ENCODE measurements at regions of chr11 and their contacts with region 1.

Region 1: DNA sequence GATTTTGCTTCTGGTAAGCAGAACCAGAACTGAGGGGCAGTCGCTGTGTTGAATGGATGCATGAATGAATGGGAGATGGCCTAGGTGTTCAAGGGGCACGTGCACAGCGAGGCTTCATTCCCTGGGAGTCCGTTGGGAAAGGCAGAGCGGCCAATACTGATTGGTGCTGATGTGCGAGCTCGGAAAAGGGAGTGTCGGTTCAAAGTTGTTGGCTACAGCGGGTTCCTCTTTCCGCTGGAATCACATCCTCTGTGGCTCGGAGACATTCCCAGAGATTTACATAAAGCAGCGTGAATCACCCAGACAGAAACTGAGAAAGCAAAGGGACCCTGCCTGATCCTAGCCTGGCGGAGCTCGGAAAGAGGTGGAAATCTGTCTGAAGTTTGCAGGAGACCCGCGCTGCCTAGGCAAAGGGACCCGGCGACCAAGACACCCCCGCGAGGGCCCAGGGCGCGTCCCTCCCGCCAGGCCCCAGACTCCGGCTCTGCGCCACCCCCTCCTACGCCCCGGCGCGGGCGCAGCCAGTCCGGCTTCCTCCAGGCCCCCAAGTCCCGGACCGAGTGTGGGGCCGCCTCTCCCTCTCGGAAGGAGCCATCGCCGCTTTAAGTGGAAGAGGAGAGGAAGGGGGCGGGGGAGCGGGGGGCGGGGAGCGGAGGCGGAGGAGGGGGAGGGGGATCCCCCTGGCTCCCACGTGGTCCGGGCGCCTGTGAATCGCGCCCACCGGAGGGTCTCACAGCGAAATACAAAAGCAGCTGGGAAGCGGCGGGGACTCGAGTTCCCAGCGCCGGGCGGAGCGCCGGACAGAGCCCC is at the start of gene FJX1:
- DNase-seq: peak; percentile 87
- H3K4me3 Mint-ChIP-seq: peak within 1 kb of the TSS; percentile 82
- H3K27ac Mint-ChIP-seq: no peak within 1 kb of the TSS
- H3K4me1 Mint-ChIP-seq: peaks cover 28% of the 10 kb centered on the region
- H3K27me3 Mint-ChIP-seq: no peaks in the 10 kb centered on the region
- CTCF ChIP-seq: no peak
- total RNA-seq, gene FJX1: 33.3 and 53.7 TPM in 2 replicates

Region 2: GRCh38 chr11:35485656-35486322 is 132.1 kb before region 1 on chr11:
- CTCF ChIA-PET with region 1: interaction called, 5 read pairs
- POLR2A ChIA-PET with region 1: no interaction called
- intact Hi-C with region 1: loop called (anchors 5 kb)
- DNase-seq: peak; percentile 80
- H3K4me3 Mint-ChIP-seq: no peak overlapping the region
- H3K27ac Mint-ChIP-seq: no peak overlapping the region
- H3K4me1 Mint-ChIP-seq: peaks cover 17% of the 10 kb centered on the region
- H3K27me3 Mint-ChIP-seq: peaks cover 10% of the 10 kb centered on the region
- CTCF ChIP-seq: peak; percentile 92

Region 3: DNA sequence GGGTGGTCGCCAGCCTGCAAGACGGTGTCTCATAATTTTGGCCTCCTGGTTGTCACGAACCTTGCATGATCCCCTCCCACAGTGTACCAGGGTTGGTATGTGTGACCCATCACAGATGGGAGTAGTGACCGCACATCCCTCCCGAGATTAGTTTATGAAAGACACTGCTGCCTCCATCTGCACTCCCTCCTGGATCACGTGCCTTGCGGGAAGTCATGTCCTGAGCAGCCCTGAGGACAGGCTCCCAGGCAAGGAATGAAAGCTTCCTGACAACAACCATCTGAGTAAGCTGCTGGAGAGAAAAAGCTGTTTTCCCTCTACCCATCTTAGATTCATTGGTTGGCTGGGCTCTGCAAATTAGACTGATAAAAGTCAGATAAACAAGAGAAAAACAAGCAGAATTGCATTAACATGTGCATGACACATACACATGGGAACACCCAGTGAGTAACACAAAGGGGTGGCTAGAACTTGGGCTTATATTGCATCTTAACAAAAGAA is 78.1 kb before region 1 on chr11:
- CTCF ChIA-PET with region 1: no interaction called
- POLR2A ChIA-PET with region 1: no interaction called
- intact Hi-C with region 1: no loop called
- DNase-seq: no peak
- H3K4me3 Mint-ChIP-seq: no peak overlapping the region
- H3K27ac Mint-ChIP-seq: no peak overlapping the region
- H3K4me1 Mint-ChIP-seq: peaks cover 8% of the 10 kb centered on the region
- H3K27me3 Mint-ChIP-seq: no peaks in the 10 kb centered on the region
- CTCF ChIP-seq: no peak

Region 4: GRCh38 chr11:35794850-35795249 is 177.0 kb after region 1 on chr11:
- CTCF ChIA-PET with region 1: interaction called, 7 read pairs
- POLR2A ChIA-PET with region 1: interaction called, 4 read pairs
- intact Hi-C with region 1: loop called (anchors 5 kb)
- DNase-seq: peak; percentile 61
- H3K4me3 Mint-ChIP-seq: no peak overlapping the region
- H3K27ac Mint-ChIP-seq: peak overlapping the region; percentile 81
- H3K4me1 Mint-ChIP-seq: peaks cover 64% of the 10 kb centered on the region
- H3K27me3 Mint-ChIP-seq: no peaks in the 10 kb centered on the region
- CTCF ChIP-seq: no peak

Region 5: DNA sequence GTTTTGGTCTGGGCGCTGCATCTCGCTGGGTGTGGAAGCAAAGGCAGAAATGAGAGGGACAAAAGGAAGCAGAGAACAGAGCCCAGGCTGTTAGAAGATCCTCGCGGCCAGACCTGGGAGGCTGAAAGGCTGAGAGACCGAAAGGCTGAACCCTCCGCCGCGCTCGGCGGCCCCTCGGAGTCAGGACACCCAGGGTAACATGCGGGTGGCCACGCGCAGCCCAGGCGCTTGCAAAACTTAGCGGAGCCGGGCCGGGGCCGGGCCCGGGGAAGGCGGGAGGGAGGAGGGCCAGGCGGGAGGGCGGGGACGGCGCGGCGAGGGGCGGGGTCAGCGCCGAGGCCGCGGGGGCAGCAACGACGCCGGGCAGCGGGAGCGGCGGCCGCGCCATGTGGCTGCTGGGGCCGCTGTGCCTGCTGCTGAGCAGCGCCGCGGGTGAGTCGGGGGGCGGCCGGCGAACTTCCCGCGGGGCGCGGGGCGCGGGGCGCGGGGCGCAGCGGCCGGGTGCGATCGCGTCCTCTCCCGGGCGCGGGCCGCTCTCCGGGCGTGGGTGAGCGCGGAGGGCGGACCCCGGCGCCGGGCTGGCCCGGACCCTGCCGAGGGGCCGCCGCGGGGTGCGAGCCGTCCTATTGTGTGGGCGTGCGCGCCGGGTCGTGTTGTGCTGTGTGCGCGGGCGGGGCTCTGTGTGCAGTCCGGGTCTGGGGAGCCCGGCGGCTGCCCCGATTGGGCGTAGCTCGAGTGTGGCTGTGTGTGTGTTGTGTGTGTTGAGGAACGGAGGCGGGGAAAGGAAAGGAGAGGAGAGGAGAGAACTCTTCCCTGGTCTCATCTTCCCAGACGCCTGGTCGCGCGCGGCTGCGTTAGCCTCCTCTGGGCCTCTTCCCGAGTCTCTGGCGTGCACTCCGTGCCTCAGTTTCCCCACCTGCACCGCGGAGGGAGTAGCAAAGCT is 326.1 kb after region 1 on chr11 and contains the start of gene LDLRAD3:
- CTCF ChIA-PET with region 1: no interaction called
- POLR2A ChIA-PET with region 1: interaction called, 3 read pairs
- intact Hi-C with region 1: loop called (anchors 5 kb)
- DNase-seq: peak; percentile 86
- H3K4me3 Mint-ChIP-seq: peak within 1 kb of the TSS; percentile 93
- H3K27ac Mint-ChIP-seq: peak within 1 kb of the TSS; percentile 73
- H3K4me1 Mint-ChIP-seq: peaks cover 37% of the 10 kb centered on the region
- H3K27me3 Mint-ChIP-seq: no peaks in the 10 kb centered on the region
- CTCF ChIP-seq: no peak
- total RNA-seq, gene LDLRAD3: 39.2 and 55.7 TPM in 2 replicates

Region 6: GRCh38 chr11:36131721-36132397 is 514.0 kb after region 1 on chr11:
- CTCF ChIA-PET with region 1: no interaction called
- POLR2A ChIA-PET with region 1: interaction called, 3 read pairs
- intact Hi-C with region 1: loop called (anchors 5 kb)
- DNase-seq: peak; percentile 24
- H3K4me3 Mint-ChIP-seq: no peak overlapping the region
- H3K27ac Mint-ChIP-seq: peak overlapping the region; percentile 44
- H3K4me1 Mint-ChIP-seq: peaks cover 9% of the 10 kb centered on the region
- H3K27me3 Mint-ChIP-seq: no peaks in the 10 kb centered on the region
- CTCF ChIP-seq: peak; percentile 34

Region 7: DNA sequence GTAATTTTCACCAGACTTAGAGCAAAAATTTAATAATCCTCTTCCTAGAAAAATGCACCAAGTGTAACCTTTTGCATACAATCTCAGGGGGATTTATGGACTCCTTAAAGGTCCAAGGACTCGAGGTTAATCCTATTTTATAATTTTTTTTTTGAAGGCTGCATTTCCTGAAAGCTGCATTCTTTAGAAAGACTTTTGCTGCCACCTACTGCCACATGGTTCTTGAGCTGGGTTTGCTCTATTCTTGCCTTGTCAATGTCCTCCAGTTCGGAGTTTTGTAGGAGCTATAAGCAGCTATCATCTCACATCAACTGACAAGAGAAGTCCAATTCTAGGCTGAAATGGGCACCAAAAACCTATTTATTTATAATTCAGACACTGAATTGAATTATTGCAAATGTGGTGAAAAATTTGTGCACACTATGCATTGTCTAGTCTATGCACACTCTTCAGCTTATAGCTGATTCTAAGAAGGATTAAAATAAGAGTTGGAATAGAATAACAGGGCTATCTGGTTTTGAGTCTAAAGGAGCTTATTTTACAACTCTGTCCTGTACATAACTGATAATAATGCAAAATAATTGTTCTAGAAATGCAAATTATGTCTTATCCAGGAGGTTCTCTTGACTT is 860.9 kb after region 1 on chr11:
- CTCF ChIA-PET with region 1: interaction called, 3 read pairs
- POLR2A ChIA-PET with region 1: no interaction called
- intact Hi-C with region 1: loop called (anchors 2 kb)
- DNase-seq: peak; percentile 59
- H3K4me3 Mint-ChIP-seq: no peak overlapping the region
- H3K27ac Mint-ChIP-seq: no peak overlapping the region
- H3K4me1 Mint-ChIP-seq: no peaks in the 10 kb centered on the region
- H3K27me3 Mint-ChIP-seq: no peaks in the 10 kb centered on the region
- CTCF ChIP-seq: peak; percentile 72

Measured in MCF 10A (cell line).